MCF 10A (cell line): ENCODE measurements at regions of chr14 and their contacts with region 1.

Region 1: GRCh38 chr14:28652811-28653221 is 113.8 kb upstream of the FOXG1 start:
- DNase-seq: peak; percentile 78
- H3K4me3 Mint-ChIP-seq: peak overlapping the region; percentile 2
- H3K27ac Mint-ChIP-seq: peak overlapping the region; percentile 84
- H3K4me1 Mint-ChIP-seq: peaks cover 37% of the 10 kb centered on the region
- H3K27me3 Mint-ChIP-seq: no peaks in the 10 kb centered on the region
- CTCF ChIP-seq: no peak

Region 2: GRCh38 chr14:28671425-28671824 is 18.6 kb after region 1 on chr14:
- CTCF ChIA-PET with region 1: no interaction called
- POLR2A ChIA-PET with region 1: interaction called, 13 read pairs
- intact Hi-C with region 1: loop called (anchors 1 kb)
- DNase-seq: peak; percentile 65
- H3K4me3 Mint-ChIP-seq: peak overlapping the region; percentile 44
- H3K27ac Mint-ChIP-seq: peak overlapping the region; percentile 80
- H3K4me1 Mint-ChIP-seq: peaks cover 29% of the 10 kb centered on the region
- H3K27me3 Mint-ChIP-seq: no peaks in the 10 kb centered on the region
- CTCF ChIP-seq: no peak

Region 3: DNA sequence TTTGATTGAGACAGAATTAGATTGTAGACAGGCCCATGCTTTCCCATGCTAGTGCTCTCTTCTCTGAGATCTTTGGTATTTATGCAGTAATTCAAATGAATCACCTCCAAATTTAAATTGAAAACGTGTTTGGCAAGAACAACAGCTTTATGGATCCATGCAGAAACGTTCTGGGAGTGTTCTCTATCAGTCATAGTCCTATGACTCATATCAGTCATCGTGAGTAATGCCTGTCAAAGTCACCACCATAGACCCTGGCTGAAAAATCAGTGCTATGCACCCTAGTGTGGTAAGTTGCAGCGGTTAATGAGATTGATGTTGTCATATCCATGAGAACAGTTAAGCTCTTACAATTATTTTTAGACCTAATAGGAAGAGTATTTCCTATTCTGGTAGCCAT is 23.7 kb after region 1 on chr14:
- CTCF ChIA-PET with region 1: no interaction called
- POLR2A ChIA-PET with region 1: interaction called, 13 read pairs
- intact Hi-C with region 1: loop called (anchors 1 kb)
- DNase-seq: peak; percentile 90
- H3K4me3 Mint-ChIP-seq: no peak overlapping the region
- H3K27ac Mint-ChIP-seq: peak overlapping the region; percentile 88
- H3K4me1 Mint-ChIP-seq: peaks cover 38% of the 10 kb centered on the region
- H3K27me3 Mint-ChIP-seq: no peaks in the 10 kb centered on the region
- CTCF ChIP-seq: no peak